HEK293T (cell line): ENCODE measurements at regions of chr14 and their contacts with region 1.

Region 1: GRCh38 chr14:54186821-54187763 is 209.7 kb upstream of the CDKN3 start:
- DNase-seq: no peak

Region 2: DNA sequence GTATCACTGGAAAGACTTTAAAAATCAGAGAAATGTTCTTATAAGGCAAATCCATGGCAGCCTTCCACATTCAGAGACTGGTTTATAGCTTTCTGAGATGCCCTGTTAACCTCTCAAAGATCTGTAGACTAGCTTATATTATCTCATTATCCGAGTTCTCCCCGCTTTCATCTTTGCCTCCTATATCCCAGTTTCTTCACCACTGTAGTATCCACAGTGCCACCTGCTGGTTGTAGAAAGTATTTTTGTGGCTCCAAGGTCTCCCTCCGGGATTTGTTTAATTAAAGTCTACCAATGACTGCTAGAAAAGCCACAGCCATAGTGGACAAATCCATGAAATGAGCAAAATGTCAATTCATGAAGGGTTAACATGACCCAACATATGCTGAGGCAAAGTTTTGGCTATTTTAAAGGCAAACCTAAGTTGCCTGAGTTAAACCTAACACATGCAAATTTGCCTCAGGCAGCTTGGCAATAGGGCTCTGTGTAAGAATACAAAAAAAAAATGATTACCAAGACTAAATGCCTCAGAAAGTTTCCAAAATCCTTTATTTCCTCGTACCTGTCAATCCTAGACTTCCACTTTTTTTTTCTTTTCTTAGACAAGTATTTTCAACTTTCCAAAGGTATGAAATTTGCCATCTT is 11.7 kb before region 1 on chr14:
- CTCF ChIA-PET with region 1: interaction called, 10 read pairs
- POLR2A ChIA-PET with region 1: no interaction called
- DNase-seq: peak; percentile 60